ENCODE measurements at regions of chr10 and their contacts with region 1.

Region 1: GRCh38 chr10:127853868-127854768 is 38.6 kb downstream of the CLRN3 start:
- DNase-seq: peak; percentile 30 to 86
- H3K4me3 ChIP-seq: no peak overlapping the region
- CTCF ChIP-seq: no peak
- POLR2A ChIP-seq: no peak

Region 2: GRCh38 chr10:127715782-127716378 is 138.2 kb before region 1 on chr10:
- intact Hi-C with region 1: loop called (anchors 10 kb)
- DNase-seq: no peak
- H3K4me3 ChIP-seq: no peak overlapping the region
- CTCF ChIP-seq: no peak
- POLR2A ChIP-seq: no peak

Region 3: GRCh38 chr10:127832501-127832900 is 21.6 kb before region 1 on chr10:
- intact Hi-C with region 1: no loop called
- DNase-seq: no peak
- H3K4me3 ChIP-seq: no peak overlapping the region
- CTCF ChIP-seq: no peak
- POLR2A ChIP-seq: no peak